Esophagus muscularis mucosa (tissue), 4 donors: ENCODE measurements at regions of chr2 and their contacts with region 1.

Region 1: GRCh38 chr2:218301176-218301819 is 9.0 kb upstream of the TMBIM1 start:
- DNase-seq: peak; percentile 97
- H3K4me3 ChIP-seq: no peak overlapping the region
- H3K27ac ChIP-seq: no peak overlapping the region
- H3K4me1 ChIP-seq: peaks cover 0 to 7% (median 3%) of the 10 kb centered on the region in 4 donors
- H3K27me3 ChIP-seq: no peaks in the 10 kb centered on the region
- CTCF ChIP-seq: peak; percentile 97 to 99 (median 98)
- EP300 ChIP-seq: no peak
- POLR2A ChIP-seq: no peak

Region 2: DNA sequence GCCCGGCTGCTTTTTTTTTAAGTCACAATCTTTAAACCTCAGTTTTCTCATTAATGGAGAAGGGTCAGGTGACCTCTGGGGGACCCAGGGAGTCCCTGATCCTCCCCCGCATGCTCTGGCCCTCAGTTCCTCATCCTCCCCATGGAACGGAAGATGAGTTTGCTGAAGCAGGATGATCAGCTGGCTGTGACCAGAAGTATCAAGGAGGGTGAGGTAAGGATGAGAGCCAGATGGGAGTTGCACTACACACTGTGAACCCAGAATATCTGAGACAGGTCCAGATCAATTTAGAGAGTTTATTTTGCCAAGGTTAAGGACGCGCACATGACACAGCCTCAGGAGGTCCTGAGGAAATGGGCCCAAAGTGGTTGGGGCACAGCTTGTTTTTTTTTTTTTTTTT is 59.1 kb after region 1 on chr2:
- intact Hi-C with region 1: loop called (anchors 5 kb)
- DNase-seq: no peak
- H3K4me3 ChIP-seq: no peak overlapping the region
- H3K27ac ChIP-seq: no peak overlapping the region
- H3K4me1 ChIP-seq: peaks cover 0 to 10% (median 8%) of the 10 kb centered on the region in 4 donors
- H3K27me3 ChIP-seq: no peaks in the 10 kb centered on the region
- CTCF ChIP-seq: no peak
- EP300 ChIP-seq: no peak
- POLR2A ChIP-seq: no peak

Region 3: DNA sequence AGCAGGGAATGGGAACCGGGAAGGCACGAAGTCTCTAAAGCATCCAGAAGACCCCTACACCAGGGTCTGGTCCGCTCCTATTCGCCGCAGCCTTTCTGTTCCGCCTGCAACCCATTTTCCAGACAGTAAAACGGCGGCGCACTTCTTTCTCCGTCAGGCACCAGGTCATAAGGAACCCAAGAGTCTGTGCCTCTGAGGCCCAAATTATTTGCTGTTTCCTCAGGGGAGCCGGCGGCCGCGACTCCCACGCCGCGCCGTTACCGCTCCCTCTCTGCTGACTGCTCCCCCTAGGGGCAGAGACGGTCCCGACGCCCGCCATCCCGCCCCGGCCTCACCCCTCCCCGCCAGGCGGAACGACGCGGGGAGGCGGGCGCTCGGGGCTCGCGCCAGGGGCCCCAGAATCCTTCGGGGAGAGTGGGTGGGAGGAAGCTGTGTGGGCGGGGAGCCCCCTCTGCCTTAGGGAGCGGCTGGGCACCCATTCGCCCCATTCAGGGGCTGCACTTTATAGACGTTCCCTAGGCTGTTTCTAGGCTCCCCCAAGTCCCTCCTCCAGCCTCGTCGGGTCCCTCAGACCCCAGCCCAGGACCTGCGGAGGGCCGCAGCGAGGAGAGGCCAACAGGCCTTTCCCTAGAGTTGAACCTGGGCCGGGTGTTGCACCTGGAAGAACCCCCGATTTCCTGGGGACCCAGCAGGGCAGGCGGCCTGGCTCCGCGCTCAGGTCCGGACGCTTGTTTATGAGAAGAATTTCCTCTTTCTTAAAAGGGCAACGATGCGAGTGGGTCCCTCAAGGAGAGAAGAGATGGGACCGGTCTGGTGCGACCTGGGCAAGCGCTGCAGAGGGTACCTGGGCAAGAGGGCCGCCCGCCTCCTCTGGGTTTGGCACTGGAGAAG is 94.7 kb after region 1 on chr2:
- intact Hi-C with region 1: loop called (anchors 5 kb)
- DNase-seq: peak; percentile 97
- H3K4me3 ChIP-seq: peak overlapping the region; percentile 88 to 96 (median 93)
- H3K27ac ChIP-seq: peak overlapping the region; percentile 98 to 100 (median 100)
- H3K4me1 ChIP-seq: peaks cover 17 to 41% (median 36%) of the 10 kb centered on the region in 4 donors
- H3K27me3 ChIP-seq: no peaks in the 10 kb centered on the region
- CTCF ChIP-seq: peak; percentile 94 to 98 (median 97)
- EP300 ChIP-seq: no peak
- POLR2A ChIP-seq: peak; percentile 23

Region 4: DNA sequence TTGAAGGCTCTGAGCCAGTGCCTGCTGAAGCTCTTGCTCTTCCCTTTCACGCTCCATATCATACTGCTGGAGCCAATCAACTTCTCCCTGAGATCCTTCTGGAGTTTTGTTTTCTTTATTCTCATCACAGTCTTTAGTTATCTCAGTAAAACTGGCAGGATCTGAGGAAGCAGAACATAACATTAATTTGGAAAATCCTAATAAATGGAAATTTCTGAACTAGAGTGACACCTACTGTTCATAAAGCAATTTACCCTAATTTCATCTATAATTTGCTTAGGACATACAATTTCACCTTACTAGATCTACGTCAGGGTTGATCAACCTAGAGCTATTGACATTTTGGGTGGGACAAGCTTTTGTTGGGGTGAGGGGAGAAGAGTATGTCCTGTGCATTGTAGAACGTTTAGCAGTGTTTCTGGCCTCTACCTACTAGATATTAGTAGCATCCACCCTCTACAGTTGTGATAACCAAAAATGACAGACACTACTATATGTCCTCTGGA is 164.8 kb after region 1 on chr2:
- intact Hi-C with region 1: loop called (anchors 5 kb)
- DNase-seq: no peak
- H3K4me3 ChIP-seq: no peak overlapping the region
- H3K27ac ChIP-seq: no peak overlapping the region
- H3K4me1 ChIP-seq: peaks cover 0 to 6% (median 2%) of the 10 kb centered on the region in 4 donors
- H3K27me3 ChIP-seq: no peaks in the 10 kb centered on the region
- CTCF ChIP-seq: peak; percentile 48 to 54 (median 51)
- EP300 ChIP-seq: no peak
- POLR2A ChIP-seq: no peak

Region 5: GRCh38 chr2:218476676-218477075 is 175.4 kb after region 1 on chr2:
- intact Hi-C with region 1: no loop called
- DNase-seq: no peak
- H3K4me3 ChIP-seq: peak overlapping the region; percentile 0 to 36 (median 22)
- H3K27ac ChIP-seq: peak overlapping the region; percentile 66 to 74 (median 72)
- H3K4me1 ChIP-seq: peaks cover 0 to 32% (median 22%) of the 10 kb centered on the region in 4 donors
- H3K27me3 ChIP-seq: no peaks in the 10 kb centered on the region
- CTCF ChIP-seq: no peak
- EP300 ChIP-seq: no peak
- POLR2A ChIP-seq: no peak

Region 6: DNA sequence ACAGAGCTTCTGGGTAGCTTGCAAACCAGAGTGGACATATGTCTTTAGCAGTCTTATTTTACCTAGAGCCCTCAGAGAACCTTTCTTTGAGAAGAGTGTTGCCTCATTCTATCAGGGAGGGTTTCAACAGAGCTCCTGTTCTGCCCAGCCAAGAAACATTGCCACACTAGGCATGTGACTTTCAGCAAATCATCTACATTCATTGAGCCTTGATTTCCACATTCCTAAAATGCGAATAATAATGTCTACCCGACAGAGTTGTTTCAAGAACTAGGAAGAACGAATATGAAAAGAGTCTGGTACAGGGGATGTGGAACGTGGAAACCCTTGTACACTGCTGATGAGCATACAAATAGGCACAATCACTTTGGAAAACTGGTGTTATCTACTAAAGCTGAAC is 538.1 kb after region 1 on chr2:
- intact Hi-C with region 1: no loop called
- DNase-seq: no peak
- H3K4me3 ChIP-seq: no peak overlapping the region
- H3K27ac ChIP-seq: no peak overlapping the region
- H3K4me1 ChIP-seq: no peaks in the 10 kb centered on the region
- H3K27me3 ChIP-seq: peaks cover 0 to 26% (median 0%) of the 10 kb centered on the region in 4 donors
- CTCF ChIP-seq: no peak
- EP300 ChIP-seq: no peak
- POLR2A ChIP-seq: no peak